CD8-positive, alpha-beta memory T cell (primary cell): ENCODE measurements at regions of chr6 and their contacts with region 1.

Region 1: GRCh38 chr6:32868257-32868788 is 14.3 kb downstream of the PSMB9 start:
- DNase-seq: peak; percentile 76 to 89 (median 82)
- H3K4me3 ChIP-seq: no peak overlapping the region
- H3K4me3 Mint-ChIP-seq: no peak overlapping the region
- H3K27ac ChIP-seq: no peak overlapping the region
- H3K27ac Mint-ChIP-seq: peak overlapping the region in 1 of 8 donors; percentile 40
- H3K4me1 ChIP-seq: peaks cover 23% of the 10 kb centered on the region
- H3K4me1 Mint-ChIP-seq: peaks cover 24 to 35% (median 31%) of the 10 kb centered on the region in 3 donors
- H3K27me3 ChIP-seq: no peaks in the 10 kb centered on the region
- H3K27me3 Mint-ChIP-seq: peaks cover 4% of the 10 kb centered on the region in 2 donors

Region 2: GRCh38 chr6:32700391-32701040 is 167.8 kb before region 1 on chr6:
- CTCF ChIA-PET with region 1: interaction called, 10 read pairs
- POLR2A ChIA-PET with region 1: no interaction called
- DNase-seq: peak in 3 of 5 donors; percentile 23 to 53 (median 31)
- H3K4me3 ChIP-seq: no peak overlapping the region
- H3K4me3 Mint-ChIP-seq: no peak overlapping the region
- H3K27ac ChIP-seq: no peak overlapping the region
- H3K27ac Mint-ChIP-seq: peak overlapping the region in 2 of 8 donors; percentile 2 to 16
- H3K4me1 ChIP-seq: no peaks in the 10 kb centered on the region
- H3K4me1 Mint-ChIP-seq: peaks cover 0 to 23% (median 4%) of the 10 kb centered on the region in 3 donors
- H3K27me3 ChIP-seq: no peaks in the 10 kb centered on the region
- H3K27me3 Mint-ChIP-seq: peaks cover 35 to 53% of the 10 kb centered on the region in 2 donors

Region 3: GRCh38 chr6:32838114-32838958 is 30.0 kb before region 1 on chr6 and contains the start of gene TAP2:
- CTCF ChIA-PET with region 1: interaction called, 190 read pairs
- POLR2A ChIA-PET with region 1: interaction called, 56 read pairs
- DNase-seq: peak; percentile 94 to 98 (median 97)
- H3K4me3 ChIP-seq: peak within 1 kb of the TSS; percentile 75
- H3K4me3 Mint-ChIP-seq: peak within 1 kb of the TSS; percentile 91 to 97 (median 96)
- H3K27ac ChIP-seq: peak within 1 kb of the TSS; percentile 77
- H3K27ac Mint-ChIP-seq: peak within 1 kb of the TSS; percentile 91 to 100 (median 100)
- H3K4me1 ChIP-seq: peaks cover 78% of the 10 kb centered on the region
- H3K4me1 Mint-ChIP-seq: peaks cover 84 to 91% (median 88%) of the 10 kb centered on the region in 3 donors
- H3K27me3 ChIP-seq: no peaks in the 10 kb centered on the region
- H3K27me3 Mint-ChIP-seq: peaks cover 0 to 2% of the 10 kb centered on the region in 2 donors
- total RNA-seq, gene TAP2: 221 to 228 TPM

Region 4: DNA sequence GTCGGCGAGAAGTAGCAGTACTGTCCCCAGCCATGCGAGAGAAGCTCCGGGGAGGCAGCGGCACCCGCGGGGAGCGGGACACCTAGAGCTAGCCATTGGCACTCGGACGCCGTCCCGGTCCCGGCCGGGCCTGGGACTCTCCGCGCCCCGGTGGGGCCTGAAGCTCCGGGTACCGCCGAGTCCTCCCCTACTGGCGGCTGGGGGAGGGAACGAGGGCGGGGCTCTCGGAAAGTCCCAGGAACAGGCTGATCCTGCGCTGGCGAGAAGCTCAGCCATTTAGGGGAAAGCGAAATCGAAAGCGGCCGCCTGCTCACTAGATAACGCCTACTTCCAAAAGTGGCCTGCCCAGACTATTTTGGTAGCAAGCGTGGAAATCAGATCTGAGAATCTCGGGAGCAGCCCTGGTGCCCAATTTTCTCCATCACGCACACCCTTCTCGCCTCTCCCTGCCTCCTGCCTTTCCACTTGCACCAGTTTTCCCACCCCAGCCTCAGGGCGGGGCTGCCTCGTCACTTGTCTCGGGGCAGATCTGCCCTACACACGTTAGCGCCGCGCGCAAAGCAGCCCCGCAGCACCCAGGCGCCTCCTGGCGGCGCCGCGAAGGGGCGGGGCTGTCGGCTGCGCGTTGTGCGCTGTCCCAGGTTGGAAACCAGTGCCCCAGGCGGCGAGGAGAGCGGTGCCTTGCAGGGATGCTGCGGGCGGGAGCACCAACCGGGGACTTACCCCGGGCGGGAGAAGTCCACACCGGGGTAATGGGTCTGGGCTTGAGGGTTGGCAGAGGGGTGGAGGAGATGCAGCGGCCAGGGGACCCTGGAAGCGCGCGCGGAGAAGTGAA is 14.6 kb before region 1 on chr6 and contains the starts of genes PSMB9 and TAP1:
- CTCF ChIA-PET with region 1: interaction called, 95 read pairs
- POLR2A ChIA-PET with region 1: interaction called, 10 read pairs
- DNase-seq: peak; percentile 93 to 97 (median 94)
- H3K4me3 ChIP-seq: peak within 1 kb of the TSS; percentile 90
- H3K4me3 Mint-ChIP-seq: peak within 1 kb of the TSS; percentile 95 to 100 (median 99)
- H3K27ac ChIP-seq: peak within 1 kb of the TSS; percentile 97
- H3K27ac Mint-ChIP-seq: peak within 1 kb of the TSS; percentile 99 to 100 (median 100)
- H3K4me1 ChIP-seq: peaks cover 68% of the 10 kb centered on the region
- H3K4me1 Mint-ChIP-seq: peaks cover 71 to 79% (median 77%) of the 10 kb centered on the region in 3 donors
- H3K27me3 ChIP-seq: no peaks in the 10 kb centered on the region
- H3K27me3 Mint-ChIP-seq: no peaks in the 10 kb centered on the region
- total RNA-seq, gene PSMB9: 245 to 255 TPM
- total RNA-seq, gene TAP1: 394 to 407 TPM

Region 5: GRCh38 chr6:32952817-32953739 is 84.8 kb after region 1 on chr6 and contains the start of gene HLA-DMA:
- CTCF ChIA-PET with region 1: interaction called, 10 read pairs
- POLR2A ChIA-PET with region 1: no interaction called
- DNase-seq: peak; percentile 55 to 84 (median 76)
- H3K4me3 ChIP-seq: peak within 1 kb of the TSS; percentile 62
- H3K4me3 Mint-ChIP-seq: peak within 1 kb of the TSS; percentile 79 to 93 (median 85)
- H3K27ac ChIP-seq: no peak within 1 kb of the TSS
- H3K27ac Mint-ChIP-seq: peak within 1 kb of the TSS; percentile 77 to 97 (median 90)
- H3K4me1 ChIP-seq: peaks cover 23% of the 10 kb centered on the region
- H3K4me1 Mint-ChIP-seq: peaks cover 42 to 83% (median 55%) of the 10 kb centered on the region in 3 donors
- H3K27me3 ChIP-seq: no peaks in the 10 kb centered on the region
- H3K27me3 Mint-ChIP-seq: no peaks in the 10 kb centered on the region
- total RNA-seq, gene HLA-DMA: 14.0 to 16.5 TPM